H1 (cell line): ENCODE measurements at regions of chr10 and their contacts with region 1.

Region 1: DNA sequence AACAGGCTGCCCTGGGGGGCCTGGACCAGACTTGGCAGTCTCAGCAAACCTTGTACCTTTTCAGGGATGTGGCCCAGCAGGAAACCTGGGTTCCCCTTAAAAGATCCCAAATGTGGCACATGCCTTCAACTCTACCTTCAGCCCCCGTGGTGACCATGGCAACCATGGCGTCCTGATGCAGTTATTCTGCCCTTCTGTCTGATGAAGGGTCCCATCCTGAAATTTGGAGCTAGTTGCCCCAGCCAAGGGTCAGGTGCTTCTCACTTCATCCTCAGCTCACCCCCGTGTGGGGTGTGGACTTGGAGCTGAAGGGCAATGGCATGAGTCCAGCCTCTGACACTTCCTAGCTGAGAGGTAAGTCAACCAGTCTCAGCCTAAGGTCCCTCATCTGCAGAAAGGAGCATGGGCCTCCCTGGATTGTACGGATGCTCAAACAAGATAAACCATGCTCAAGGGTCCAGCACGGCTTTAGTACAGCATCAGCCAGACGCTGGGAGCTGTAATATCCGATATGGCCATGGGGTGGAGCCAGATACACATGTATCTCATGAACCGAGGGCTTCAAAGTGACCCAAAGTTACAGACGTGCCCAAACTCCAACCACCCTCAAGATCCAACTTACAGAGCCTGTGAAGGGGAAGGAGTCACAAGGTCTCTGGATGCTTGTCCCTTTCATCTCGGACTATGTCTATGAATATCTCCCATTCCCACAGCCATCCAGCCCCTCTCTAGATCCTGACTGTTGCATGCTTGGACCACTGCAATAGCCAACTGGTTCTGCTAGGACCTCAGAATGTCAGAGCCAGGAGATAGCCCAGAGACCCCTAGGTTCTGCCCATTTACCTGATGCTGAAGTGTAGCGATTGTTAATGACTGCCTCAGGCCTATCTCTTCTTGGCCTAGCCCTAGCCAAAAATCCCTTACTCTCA is 142.5 kb downstream of the SH3PXD2A start:
- DNase-seq: peak; percentile 53 to 98
- H3K4me3 ChIP-seq: no peak overlapping the region
- H3K27ac ChIP-seq: no peak overlapping the region
- H3K4me1 ChIP-seq: peaks cover 0 to 3% (median 1%) of the 10 kb centered on the region in 4 experiments; a peak in 2 of 7 replicates
- H3K27me3 ChIP-seq: no peaks in the 10 kb centered on the region
- CTCF ChIP-seq: peak; percentile 68 to 96 (median 93)
- EP300 ChIP-seq: no peak
- POLR2A ChIP-seq: no peak
- RAD21 ChIP-seq: peak; percentile 99

Region 2: GRCh38 chr10:103696411-103697145 is 16.3 kb before region 1 on chr10:
- CTCF ChIA-PET with region 1: interaction called, 110 read pairs
- POLR2A ChIA-PET with region 1: interaction called, 3 read pairs
- DNase-seq: peak; percentile 53 to 73
- H3K4me3 ChIP-seq: peak overlapping the region in 1 of 4 experiments; percentile 18; a peak in 1 of 8 replicates
- H3K27ac ChIP-seq: no peak overlapping the region
- H3K4me1 ChIP-seq: peaks cover 3 to 21% (median 14%) of the 10 kb centered on the region in 4 experiments
- H3K27me3 ChIP-seq: peaks cover 7 to 35% (median 30%) of the 10 kb centered on the region in 4 experiments
- CTCF ChIP-seq: peak; percentile 22 to 38 (median 37)
- EP300 ChIP-seq: no peak
- POLR2A ChIP-seq: no peak
- RAD21 ChIP-seq: peak; percentile 23 to 28; a peak in 3 of 4 replicates

Region 3: GRCh38 chr10:103745341-103746227 is 32.8 kb after region 1 on chr10:
- CTCF ChIA-PET with region 1: interaction called, 42 read pairs
- POLR2A ChIA-PET with region 1: no interaction called
- DNase-seq: no peak
- H3K4me3 ChIP-seq: no peak overlapping the region
- H3K27ac ChIP-seq: no peak overlapping the region; the same call in 1 of the 2 replicates
- H3K4me1 ChIP-seq: no peaks in the 10 kb centered on the region; a peak in 2 of 7 replicates
- H3K27me3 ChIP-seq: no peaks in the 10 kb centered on the region; a peak in 1 of 7 replicates
- CTCF ChIP-seq: peak; percentile 15 to 29 (median 16); a peak in 3 of 4 replicates
- EP300 ChIP-seq: no peak
- POLR2A ChIP-seq: no peak
- RAD21 ChIP-seq: peak in 1 of 2 experiments; percentile 28; a peak in 3 of 4 replicates

Region 4: DNA sequence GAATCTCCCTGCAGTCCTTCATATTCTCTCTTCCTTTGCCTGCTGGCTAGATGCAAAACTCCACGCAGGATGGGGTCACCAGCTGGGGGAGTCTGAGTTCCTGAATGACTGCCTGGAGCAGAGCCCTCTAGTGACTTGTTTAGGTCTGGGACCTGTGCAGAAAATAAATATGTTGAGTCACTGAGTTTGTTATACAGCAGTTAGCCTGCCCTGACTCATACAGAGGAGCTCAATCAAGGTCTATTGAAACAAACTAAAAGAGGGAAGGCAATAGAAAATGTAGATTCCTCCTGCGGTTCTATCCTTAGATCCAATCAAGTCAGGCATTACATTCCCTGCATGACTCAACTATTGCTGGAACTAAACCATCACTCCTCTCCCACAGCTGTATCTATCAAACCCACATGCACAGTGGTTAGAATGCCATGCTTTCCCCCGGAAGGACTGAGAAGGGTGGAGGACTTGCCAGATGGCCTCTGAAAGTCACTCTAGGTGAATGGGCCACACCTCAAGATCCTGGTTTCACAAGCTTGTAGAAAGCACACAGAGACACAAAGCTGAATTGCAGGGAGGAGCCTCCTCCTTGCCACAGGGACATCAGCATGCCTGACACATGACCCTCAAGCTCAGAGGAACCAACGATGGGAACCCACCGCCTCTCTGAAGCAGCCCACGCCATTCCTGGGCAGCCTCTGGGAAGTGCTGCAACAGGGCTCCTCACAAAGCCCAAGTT is 68.7 kb after region 1 on chr10:
- CTCF ChIA-PET with region 1: interaction called, 21 read pairs
- POLR2A ChIA-PET with region 1: no interaction called
- DNase-seq: no peak
- H3K4me3 ChIP-seq: no peak overlapping the region
- H3K27ac ChIP-seq: no peak overlapping the region
- H3K4me1 ChIP-seq: peaks cover 0 to 2% (median 0%) of the 10 kb centered on the region in 4 experiments; a peak in 1 of 7 replicates
- H3K27me3 ChIP-seq: no peaks in the 10 kb centered on the region
- CTCF ChIP-seq: peak; percentile 22 to 78 (median 56)
- EP300 ChIP-seq: no peak
- POLR2A ChIP-seq: no peak
- RAD21 ChIP-seq: peak; percentile 34 to 51; a peak in 3 of 4 replicates

Region 5: DNA sequence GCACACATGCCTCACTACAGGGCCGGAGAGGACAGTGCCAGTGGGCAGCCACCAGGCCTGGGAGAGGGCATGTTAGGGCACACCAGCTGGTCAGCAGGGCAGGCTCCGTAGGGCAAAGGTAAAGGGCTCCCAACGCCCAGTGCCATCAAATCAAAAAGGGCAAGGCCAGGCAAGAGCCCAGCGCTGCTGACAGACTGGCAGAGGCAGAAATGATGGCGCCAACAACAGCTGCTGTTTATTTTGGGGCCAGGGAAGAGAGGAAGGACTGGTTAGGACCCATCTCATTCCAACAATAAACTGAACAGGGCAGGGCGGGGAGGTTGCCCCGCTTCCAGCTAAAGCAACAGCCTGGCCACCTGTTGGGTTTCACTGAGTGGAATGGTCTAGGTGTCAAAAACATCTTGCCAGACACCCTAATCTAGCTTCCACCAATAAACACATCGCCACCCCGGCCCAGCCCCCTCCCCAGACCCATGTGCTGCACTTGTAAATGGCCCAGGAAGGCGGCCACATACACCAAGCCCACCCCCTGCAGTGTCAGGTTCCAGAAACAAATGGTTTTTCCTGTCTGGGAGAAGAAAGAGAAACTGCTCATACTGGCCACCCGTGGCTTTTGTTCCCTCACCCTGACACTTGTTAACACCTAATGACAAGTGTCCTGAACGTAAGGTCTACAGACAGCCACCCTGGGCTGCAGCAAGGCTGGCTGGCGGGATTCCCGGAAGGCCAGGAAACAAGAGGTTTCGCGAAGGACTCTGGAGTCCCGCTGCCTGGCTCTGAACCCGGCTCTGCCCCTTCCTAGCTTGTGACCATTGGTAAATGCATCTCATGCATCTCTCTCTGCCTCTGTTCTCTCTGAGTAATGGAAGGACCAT is 127.3 kb after region 1 on chr10:
- CTCF ChIA-PET with region 1: interaction called, 10 read pairs
- POLR2A ChIA-PET with region 1: no interaction called
- DNase-seq: peak in 1 of 2 experiments; percentile 70
- H3K4me3 ChIP-seq: no peak overlapping the region; a peak in 1 of 8 replicates
- H3K27ac ChIP-seq: no peak overlapping the region
- H3K4me1 ChIP-seq: peaks cover 11 to 24% (median 21%) of the 10 kb centered on the region in 4 experiments
- H3K27me3 ChIP-seq: no peaks in the 10 kb centered on the region
- CTCF ChIP-seq: no peak
- EP300 ChIP-seq: no peak
- POLR2A ChIP-seq: no peak
- RAD21 ChIP-seq: no peak

Region 6: DNA sequence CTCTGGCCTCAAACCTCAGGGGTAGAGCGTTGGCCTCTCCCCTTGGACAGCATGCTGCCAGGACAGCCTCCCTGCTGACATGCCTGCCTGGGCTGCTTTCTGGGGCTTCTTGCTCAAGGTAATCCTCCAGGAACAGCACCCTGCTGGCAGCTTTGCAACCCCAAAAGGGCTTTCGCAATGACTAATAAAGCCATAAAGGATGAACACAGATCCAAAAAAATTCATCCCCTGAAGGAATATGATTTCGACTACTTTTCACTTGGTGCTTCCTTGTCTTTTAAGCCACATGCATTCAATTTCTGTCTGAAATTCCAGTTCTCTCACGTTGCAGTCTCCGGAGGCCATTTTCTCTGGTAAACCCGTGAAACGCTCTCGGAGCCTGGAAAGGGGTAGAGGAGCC is 157.7 kb after region 1 on chr10:
- CTCF ChIA-PET with region 1: interaction called, 75 read pairs
- POLR2A ChIA-PET with region 1: no interaction called
- DNase-seq: no peak
- H3K4me3 ChIP-seq: no peak overlapping the region
- H3K27ac ChIP-seq: no peak overlapping the region
- H3K4me1 ChIP-seq: peaks cover 0 to 8% (median 1%) of the 10 kb centered on the region in 4 experiments; a peak in 1 of 7 replicates
- H3K27me3 ChIP-seq: no peaks in the 10 kb centered on the region
- CTCF ChIP-seq: no peak
- EP300 ChIP-seq: no peak
- POLR2A ChIP-seq: no peak
- RAD21 ChIP-seq: no peak